Head of caudate nucleus (tissue), 42 donors: ENCODE measurements at regions of chr9 and their contacts with region 1.

Region 1: DNA sequence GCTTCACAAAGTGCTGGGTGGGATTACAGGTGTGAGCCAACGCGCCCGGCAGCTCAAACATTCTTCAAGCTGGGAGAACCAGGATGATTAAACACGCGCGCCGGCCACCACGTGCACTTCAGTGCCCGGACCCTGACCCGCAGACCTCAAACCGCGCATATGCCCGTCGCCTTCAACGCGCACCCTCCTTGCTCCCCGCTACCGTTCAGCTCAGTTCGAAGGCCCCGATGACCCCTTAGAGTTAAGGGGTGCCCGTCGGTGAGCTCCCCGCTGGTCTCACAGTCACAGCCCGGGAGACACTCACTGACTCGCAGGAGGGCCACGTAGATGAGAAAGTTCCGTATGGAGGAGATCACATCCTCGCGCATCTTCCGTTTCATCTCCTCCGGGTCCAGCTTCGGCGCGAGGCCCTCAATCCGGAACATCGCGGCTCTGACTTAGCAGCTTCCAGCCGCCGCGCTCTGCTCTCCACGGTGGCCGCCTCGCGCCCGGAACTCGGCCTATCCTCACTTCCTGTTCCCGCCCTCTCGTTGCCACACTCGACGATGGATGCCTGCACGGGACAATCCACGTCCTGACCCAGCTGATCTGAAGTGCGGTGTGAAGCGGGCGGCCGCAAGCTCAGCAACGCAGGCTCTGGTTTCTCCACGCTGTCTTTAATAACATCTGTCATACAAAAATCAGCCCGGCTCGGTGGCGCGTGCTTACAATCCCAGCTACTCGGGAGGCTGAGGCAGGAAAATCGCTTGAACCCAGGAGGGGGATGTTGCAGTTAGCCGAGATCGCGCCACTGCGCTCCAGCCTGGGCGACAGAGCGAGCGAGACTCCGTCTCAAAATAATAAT is at the start of gene TOMM5:
- DNase-seq: peak; percentile 90 to 98 (median 95)

Region 2: DNA sequence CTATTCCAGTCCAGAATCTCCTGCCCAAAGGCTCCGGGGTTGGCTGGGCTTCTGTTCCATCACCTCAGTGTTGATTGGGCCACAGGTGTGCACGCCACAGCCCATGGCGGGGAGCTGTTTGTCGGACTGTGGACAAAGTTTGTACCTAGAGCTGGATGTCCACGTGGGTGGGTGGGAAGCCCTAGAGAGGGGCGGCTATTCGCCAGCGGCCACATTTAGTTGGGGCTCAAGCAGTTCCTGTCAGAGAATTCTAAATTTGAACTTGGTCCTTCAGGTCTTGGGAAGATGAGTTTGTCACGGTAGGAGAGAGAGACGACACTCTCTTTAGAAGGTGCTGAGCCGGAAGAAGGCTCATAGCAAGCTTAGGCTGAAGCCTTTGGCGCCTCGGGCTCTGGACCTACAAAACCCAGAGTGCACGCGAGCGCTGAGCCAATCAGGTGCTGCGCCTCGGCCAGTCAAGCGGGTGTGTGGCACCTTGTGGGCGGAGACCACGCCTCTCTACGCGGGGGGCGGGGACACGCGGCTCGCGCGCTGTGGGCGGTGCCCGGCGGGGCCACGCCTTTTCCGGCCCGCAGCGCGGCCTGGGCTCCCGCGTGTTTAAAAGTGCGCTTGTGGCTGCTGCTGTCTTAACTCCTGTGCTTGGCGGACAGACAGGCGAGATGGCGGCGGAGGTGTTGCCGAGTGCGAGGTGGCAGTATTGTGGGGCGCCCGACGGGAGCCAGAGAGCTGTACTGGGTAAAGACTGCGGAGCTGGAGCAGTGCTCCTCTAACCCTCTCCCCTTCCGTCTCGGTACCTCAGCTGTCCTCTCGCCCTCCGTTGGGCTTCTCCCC is 106.7 kb before region 1 on chr9 and contains the start of gene POLR1E:
- intact Hi-C with region 1: loop called (anchors 10 kb)
- DNase-seq: peak; percentile 87 to 98 (median 94)

Region 3: GRCh38 chr9:37540634-37541033 is 51.7 kb before region 1 on chr9:
- intact Hi-C with region 1: no loop called
- DNase-seq: peak in 25 of 42 donors; percentile 9 to 69 (median 30)

Region 4: DNA sequence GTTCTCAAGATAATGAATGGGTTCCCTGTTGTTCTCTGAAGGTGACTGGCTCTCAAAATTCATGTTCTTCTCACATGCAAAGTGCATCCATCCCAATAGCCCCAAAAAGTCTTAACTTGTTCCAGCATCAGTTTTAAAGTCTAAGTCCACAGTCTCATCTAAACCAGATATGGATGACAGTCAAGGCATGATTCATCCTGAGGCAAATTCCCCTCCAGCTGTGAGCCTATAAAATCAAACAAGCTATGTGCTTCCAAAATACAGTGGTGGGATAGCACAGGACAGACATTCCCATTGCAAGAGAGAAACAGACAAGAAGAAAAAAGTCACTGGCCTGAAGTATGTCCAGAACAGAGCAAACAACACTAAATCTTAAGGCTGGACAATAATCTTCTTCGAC is 41.5 kb before region 1 on chr9:
- intact Hi-C with region 1: no loop called
- DNase-seq: no peak

Region 5: DNA sequence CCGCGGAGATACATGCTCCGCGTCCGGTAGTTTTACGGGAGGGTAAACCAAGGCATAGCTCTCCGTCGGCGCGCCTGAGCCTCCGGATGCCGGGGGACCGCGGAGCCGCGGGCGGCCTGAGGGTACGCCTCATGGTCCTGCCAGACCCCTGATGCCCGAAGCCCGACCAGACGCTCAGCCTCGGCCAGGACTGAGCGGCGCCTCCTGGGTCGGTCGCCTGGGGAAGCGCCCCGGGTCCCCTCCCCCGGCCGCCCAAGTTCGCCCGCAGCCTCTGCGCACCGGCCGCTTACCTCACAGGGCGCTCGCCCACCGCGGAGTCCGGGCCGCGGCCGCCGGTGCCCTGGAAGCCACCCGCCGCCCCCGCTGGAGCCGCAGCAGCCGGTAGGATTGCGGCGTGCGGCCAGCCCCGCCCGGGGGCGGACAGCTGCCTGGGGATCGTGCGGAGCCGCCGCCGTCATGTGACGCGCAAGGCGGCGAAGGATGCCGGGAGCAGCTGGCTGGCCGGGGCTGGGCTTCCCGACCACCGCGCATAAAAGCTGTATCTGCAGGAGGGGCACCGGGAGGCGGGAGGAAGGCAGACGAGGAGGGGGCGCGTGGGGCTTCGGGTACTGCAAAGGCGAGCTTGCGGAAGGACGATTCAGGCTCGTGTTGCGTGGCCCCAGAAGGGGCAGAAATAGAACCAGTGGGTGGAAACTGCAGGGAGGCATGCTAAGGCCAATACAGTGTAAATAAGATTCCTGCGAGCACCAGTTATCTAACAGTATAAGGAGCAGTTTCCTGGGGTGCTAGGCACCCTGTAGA is 16.2 kb before region 1 on chr9 and contains the start of gene FBXO10:
- intact Hi-C with region 1: loop called (anchors 2 kb)
- DNase-seq: peak; percentile 43 to 88 (median 80)

Region 6: DNA sequence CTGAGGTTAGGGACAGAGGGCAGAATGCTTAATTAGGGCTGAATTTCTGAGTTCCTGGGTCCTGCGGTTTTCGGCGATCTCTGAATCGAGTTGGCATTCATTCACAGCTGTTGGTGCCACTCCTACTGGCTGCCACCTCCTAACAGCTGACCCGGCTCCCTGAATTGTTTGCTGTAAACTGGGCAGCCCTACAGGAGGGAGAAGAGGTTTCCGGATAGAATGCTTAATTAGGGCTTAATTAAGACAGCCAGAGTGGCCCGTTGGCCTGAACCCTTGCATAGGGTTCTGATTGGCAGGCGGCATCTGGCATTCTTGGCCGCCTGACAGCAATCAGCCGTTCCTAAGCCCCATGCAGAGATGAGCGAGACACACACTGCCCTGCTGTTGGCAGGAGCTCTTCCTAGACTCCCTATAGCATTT is 84.1 kb after region 1 on chr9:
- intact Hi-C with region 1: no loop called
- DNase-seq: peak in 41 of 42 donors; percentile 9 to 76 (median 50)

Region 7: GRCh38 chr9:37753489-37754190 is 161.3 kb after region 1 on chr9 and contains the start of gene TRMT10B:
- intact Hi-C with region 1: loop called (anchors 10 kb)
- DNase-seq: peak; percentile 48 to 89 (median 76)

Region 8: DNA sequence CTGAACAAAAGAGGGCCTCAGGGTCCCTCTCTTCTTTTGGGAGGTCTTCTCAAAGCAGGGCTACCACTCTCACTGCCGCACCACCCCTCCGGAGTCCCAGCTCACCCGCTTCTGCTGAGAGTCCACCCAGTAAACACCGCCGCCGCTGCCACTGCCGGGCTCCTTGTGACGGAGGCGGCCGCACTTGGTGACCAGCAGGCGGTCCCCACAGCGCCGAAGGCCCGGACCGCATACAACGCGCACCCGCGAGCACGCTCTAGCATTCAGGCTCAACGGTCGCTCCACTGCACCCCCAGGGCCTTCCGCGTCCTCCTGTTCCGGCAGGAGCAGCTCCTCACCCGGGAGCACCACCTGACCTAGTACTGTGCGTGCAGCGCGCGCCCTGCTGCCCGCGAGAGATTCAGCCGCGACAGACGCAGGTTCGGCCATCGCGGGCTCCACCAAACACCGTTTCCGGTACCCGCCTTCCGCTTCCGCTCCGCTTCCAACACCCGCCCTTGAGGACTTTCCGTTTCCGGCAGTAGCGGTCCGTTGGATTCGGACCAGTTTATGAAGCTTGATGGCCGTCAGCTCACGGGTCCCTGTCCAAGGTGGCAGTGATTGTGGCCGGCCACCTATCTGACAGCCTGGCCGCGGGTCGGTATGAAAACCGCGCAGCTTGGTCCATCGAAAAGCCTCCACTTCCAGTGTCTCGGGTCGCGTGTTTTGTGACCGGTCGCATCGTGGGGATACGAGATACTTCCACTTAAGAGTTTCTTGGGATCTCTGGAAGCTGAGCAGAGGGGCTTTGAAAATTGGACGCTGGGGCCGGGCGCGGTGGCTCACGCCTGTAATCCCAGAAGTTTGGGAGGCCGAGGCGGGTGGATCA is 192.5 kb after region 1 on chr9 and contains the start of gene EXOSC3:
- intact Hi-C with region 1: loop called (anchors 10 kb)
- DNase-seq: peak; percentile 85 to 97 (median 92)